Dorsolateral prefrontal cortex (tissue), 120 donors: ENCODE measurements at regions of chr1 and their contacts with region 1.

Region 1: DNA sequence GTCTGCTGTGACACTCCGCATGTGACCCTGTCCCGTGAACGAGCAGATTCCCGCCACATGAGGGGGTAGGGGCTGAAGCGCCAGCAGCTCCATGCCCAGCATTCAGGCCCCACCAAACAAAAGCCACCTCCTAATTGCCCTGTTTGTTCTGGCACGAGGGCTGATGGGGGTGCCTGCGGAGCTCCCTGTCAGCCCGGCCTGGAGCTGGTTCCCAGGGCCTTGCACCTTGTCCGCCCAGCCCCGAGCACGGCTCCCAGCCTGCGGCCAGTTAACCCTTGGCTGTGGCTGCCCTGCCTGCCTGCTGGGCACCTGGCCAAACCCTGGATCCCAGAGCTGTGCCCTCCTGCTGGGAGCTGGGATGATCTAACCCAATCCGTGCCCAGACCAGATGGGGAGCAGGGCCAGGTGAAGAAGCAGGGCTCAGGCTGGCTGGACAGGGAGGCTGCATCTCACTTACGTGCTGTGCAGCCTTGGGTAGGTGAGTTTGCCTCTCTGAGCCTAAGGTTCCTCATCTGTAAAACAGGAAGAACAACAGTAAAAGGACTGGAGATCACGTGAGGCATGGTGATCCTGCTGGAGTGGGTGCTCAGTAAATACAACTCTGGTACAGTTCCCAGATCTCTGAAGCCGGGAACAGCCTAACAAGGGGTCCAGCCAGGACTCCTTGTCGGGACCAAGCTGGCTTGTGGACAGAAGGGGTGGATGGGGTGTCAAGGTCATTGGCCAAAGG is 110.9 kb upstream of the IFFO2 start:
- DNase-seq: peak in 5 of 10 donors; percentile 50 to 83 (median 80)
- H3K4me3 ChIP-seq: peak overlapping the region in 29 of 59 donors; percentile 1 to 54 (median 16)
- H3K27ac ChIP-seq: peak overlapping the region in 23 of 59 donors; percentile 2 to 79 (median 55)
- H3K27me3 ChIP-seq: no peaks in the 10 kb centered on the region
- CTCF ChIP-seq: peak in 18 of 56 donors; percentile 11 to 49 (median 20)

Region 2: GRCh38 chr1:18941221-18942141 is 125.9 kb before region 1 on chr1:
- intact Hi-C with region 1: loop called in 1 of 2 experiments (anchors 5 kb)
- DNase-seq: peak in 9 of 10 donors; percentile 68 to 94 (median 86)
- H3K4me3 ChIP-seq: peak overlapping the region in 19 of 59 donors; percentile 6 to 41 (median 14)
- H3K27ac ChIP-seq: peak overlapping the region; percentile 85 to 99 (median 97)
- H3K27me3 ChIP-seq: no peaks in the 10 kb centered on the region
- CTCF ChIP-seq: peak in 4 of 56 donors; percentile 6 to 13 (median 6)

Region 3: GRCh38 chr1:18999359-18999758 is 68.0 kb before region 1 on chr1:
- intact Hi-C with region 1: loop called in 1 of 2 experiments (anchors 5 kb)
- DNase-seq: no peak
- H3K4me3 ChIP-seq: no peak overlapping the region
- H3K27ac ChIP-seq: no peak overlapping the region
- H3K27me3 ChIP-seq: no peaks in the 10 kb centered on the region
- CTCF ChIP-seq: no peak

Region 4: GRCh38 chr1:19044975-19045831 is 22.1 kb before region 1 on chr1:
- intact Hi-C with region 1: loop called in 1 of 2 experiments (anchors 2 kb)
- DNase-seq: peak in 9 of 10 donors; percentile 60 to 87 (median 82)
- H3K4me3 ChIP-seq: peak overlapping the region in 10 of 59 donors; percentile 3 to 45 (median 20)
- H3K27ac ChIP-seq: peak overlapping the region in 1 of 59 donors; percentile 33
- H3K27me3 ChIP-seq: peaks cover 0 to 24% (median 0%) of the 10 kb centered on the region in 45 donors
- CTCF ChIP-seq: peak in 10 of 56 donors; percentile 6 to 32 (median 18)